Activated T-helper 2 cell treated with anti-CD3 and anti-CD28 coated beads, Interferon-gamma antibody, Interleukin-2, Interleukin-4, amounts not matched to agents 10 μg/mL and 5 μg/mL and 100 μg/mL, durations not matched to agents 14 hours and 24 hours and 36 hours (primary cell): ENCODE measurements at regions of chr3 and their contacts with region 1.

Region 1: DNA sequence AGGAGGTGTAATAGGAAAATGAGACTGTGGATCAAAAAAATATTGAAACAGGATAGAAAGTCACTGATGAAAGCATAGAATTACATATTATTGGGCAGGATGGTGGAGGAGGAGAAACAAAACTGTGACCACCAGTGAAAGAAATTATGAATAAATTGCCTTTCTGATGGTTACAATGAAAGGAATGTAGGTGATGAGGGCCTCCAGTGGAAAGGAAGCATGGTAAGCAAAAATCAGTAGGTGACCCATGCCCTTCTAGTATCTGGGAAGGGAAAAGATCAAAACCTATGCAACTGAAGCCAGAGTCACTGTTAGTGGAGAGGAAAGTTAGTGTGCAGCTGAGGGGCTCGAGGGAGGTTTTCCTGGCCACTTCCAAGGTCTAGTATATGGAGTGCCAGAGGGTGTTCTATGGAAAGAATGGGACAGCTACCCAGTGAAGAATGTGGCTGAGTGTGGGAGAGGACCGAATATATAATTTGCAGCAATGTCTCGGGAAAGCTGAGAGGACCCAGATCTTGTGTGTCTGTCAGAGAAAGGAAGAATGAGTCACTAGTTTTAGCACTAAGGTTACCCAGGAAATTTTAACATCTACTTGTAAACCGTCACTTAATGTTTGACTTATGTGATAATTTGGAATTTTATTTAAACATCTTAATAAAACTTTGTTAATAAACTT is 146.2 kb downstream of the NFKBIZ start:
- DNase-seq: no peak
- H3K4me3 Mint-ChIP-seq: peak overlapping the region; percentile 24
- H3K27ac Mint-ChIP-seq: peak overlapping the region; percentile 83
- H3K4me1 Mint-ChIP-seq: peaks cover 63% of the 10 kb centered on the region
- H3K27me3 Mint-ChIP-seq: peaks cover 2% of the 10 kb centered on the region

Region 2: GRCh38 chr3:101950510-101950909 is 45.0 kb before region 1 on chr3:
- intact Hi-C with region 1: loop called (anchors 1 kb)
- DNase-seq: no peak
- H3K4me3 Mint-ChIP-seq: no peak overlapping the region
- H3K27ac Mint-ChIP-seq: peak overlapping the region; percentile 53
- H3K4me1 Mint-ChIP-seq: peaks cover 26% of the 10 kb centered on the region
- H3K27me3 Mint-ChIP-seq: no peaks in the 10 kb centered on the region

Region 3: GRCh38 chr3:102034639-102035451 is 39.3 kb after region 1 on chr3:
- intact Hi-C with region 1: loop called (anchors 5 kb)
- DNase-seq: no peak
- H3K4me3 Mint-ChIP-seq: no peak overlapping the region
- H3K27ac Mint-ChIP-seq: no peak overlapping the region
- H3K4me1 Mint-ChIP-seq: peaks cover 9% of the 10 kb centered on the region
- H3K27me3 Mint-ChIP-seq: peaks cover 3% of the 10 kb centered on the region

Region 4: DNA sequence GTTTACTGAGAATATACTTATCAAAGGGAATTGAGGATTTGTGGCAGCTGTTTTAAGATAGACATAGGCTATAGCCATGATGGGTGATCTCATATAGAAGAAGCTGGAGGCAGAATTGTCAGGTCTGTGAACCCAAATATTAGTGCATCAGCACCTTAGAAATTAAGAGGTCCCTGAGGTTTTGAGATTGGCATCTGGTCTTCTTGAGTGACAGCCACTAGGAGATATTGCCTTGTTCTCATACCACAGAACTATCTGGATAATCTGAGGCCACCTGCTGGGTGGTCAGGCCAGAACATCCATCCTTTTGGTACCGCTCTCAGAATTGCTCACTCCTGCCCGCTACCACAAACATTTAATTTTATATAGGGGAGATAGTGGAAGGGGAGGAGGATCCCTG is 228.6 kb after region 1 on chr3:
- intact Hi-C with region 1: loop called (anchors 5 kb)
- DNase-seq: no peak
- H3K4me3 Mint-ChIP-seq: no peak overlapping the region
- H3K27ac Mint-ChIP-seq: no peak overlapping the region
- H3K4me1 Mint-ChIP-seq: peaks cover 38% of the 10 kb centered on the region
- H3K27me3 Mint-ChIP-seq: peaks cover 16% of the 10 kb centered on the region

Region 5: GRCh38 chr3:102536456-102536855 is 540.9 kb after region 1 on chr3:
- intact Hi-C with region 1: loop called (anchors 10 kb)
- DNase-seq: no peak
- H3K4me3 Mint-ChIP-seq: no peak overlapping the region
- H3K27ac Mint-ChIP-seq: no peak overlapping the region
- H3K4me1 Mint-ChIP-seq: peaks cover 3% of the 10 kb centered on the region
- H3K27me3 Mint-ChIP-seq: no peaks in the 10 kb centered on the region

Region 6: DNA sequence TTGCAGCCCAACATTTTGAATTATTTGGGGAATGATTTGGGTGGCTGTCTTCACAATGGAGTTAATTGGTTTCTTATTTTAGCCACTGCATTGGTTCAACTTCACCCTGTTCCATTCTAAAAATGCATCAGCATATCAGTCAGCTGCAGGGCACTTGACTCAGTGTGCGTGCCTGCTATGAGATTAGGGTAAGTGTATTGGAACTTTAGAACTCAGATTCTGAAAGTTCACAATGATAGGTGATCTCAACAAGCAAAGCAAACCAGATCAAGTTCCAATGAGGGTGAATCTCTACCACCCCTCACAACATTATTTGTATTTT is 704.3 kb after region 1 on chr3:
- intact Hi-C with region 1: no loop called
- DNase-seq: no peak
- H3K4me3 Mint-ChIP-seq: no peak overlapping the region
- H3K27ac Mint-ChIP-seq: no peak overlapping the region
- H3K4me1 Mint-ChIP-seq: no peaks in the 10 kb centered on the region
- H3K27me3 Mint-ChIP-seq: no peaks in the 10 kb centered on the region